H1 (cell line): ENCODE measurements at regions of chr4 and their contacts with region 1.

Region 1: GRCh38 chr4:15805583-15806517 is 27.7 kb downstream of the CD38 start:
- DNase-seq: no peak
- H3K4me3 ChIP-seq: no peak overlapping the region
- H3K27ac ChIP-seq: no peak overlapping the region
- H3K4me1 ChIP-seq: peaks cover 0 to 3% (median 0%) of the 10 kb centered on the region in 4 experiments; a peak in 1 of 7 replicates
- H3K27me3 ChIP-seq: no peaks in the 10 kb centered on the region
- CTCF ChIP-seq: peak; percentile 0 to 85 (median 78)
- EP300 ChIP-seq: no peak
- POLR2A ChIP-seq: no peak
- RAD21 ChIP-seq: peak; percentile 92 to 95

Region 2: GRCh38 chr4:15479089-15479912 is 326.5 kb before region 1 on chr4:
- CTCF ChIA-PET with region 1: interaction called, 15 read pairs
- POLR2A ChIA-PET with region 1: no interaction called
- DNase-seq: peak; percentile 73 to 87
- H3K4me3 ChIP-seq: peak overlapping the region; percentile 40 to 69 (median 66)
- H3K27ac ChIP-seq: peak overlapping the region; percentile 86
- H3K4me1 ChIP-seq: peaks cover 3 to 6% (median 5%) of the 10 kb centered on the region in 4 experiments; a peak in 5 of 7 replicates
- H3K27me3 ChIP-seq: no peaks in the 10 kb centered on the region
- CTCF ChIP-seq: peak in 2 of 3 experiments; percentile 68 to 80; a peak in 3 of 4 replicates
- EP300 ChIP-seq: no peak
- POLR2A ChIP-seq: peak; percentile 55 to 85
- RAD21 ChIP-seq: peak; percentile 89 to 90

Region 3: DNA sequence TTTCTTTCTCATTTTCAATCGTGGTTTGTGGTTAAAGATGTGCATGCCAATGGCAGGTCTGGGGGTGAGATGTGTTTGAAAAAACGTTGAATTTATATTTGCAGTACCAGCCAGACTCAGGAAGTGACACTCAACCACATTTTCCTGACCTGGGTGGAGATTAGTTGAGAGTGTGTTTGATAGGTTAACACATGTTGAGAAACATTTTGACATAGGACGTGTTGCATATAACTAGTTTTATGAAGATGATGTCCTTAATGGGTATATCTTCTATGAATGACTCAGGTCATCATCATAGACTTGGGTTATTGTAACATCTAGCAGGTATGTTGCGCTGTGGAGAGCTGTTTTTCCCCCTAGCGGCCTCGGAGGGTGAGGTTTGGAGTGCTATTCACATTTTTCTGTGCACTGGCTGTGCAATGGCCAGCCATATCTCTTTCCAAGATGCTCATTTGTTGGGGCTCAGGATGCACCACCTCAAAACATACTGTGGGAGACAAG is 49.4 kb before region 1 on chr4:
- CTCF ChIA-PET with region 1: interaction called, 11 read pairs
- POLR2A ChIA-PET with region 1: no interaction called
- DNase-seq: no peak
- H3K4me3 ChIP-seq: no peak overlapping the region
- H3K27ac ChIP-seq: no peak overlapping the region
- H3K4me1 ChIP-seq: no peaks in the 10 kb centered on the region
- H3K27me3 ChIP-seq: no peaks in the 10 kb centered on the region
- CTCF ChIP-seq: peak in 1 of 3 experiments; percentile 2; a peak in 1 of 4 replicates
- EP300 ChIP-seq: no peak
- POLR2A ChIP-seq: no peak
- RAD21 ChIP-seq: no peak

Region 4: GRCh38 chr4:15906024-15906443 is 100.2 kb after region 1 on chr4:
- CTCF ChIA-PET with region 1: interaction called, 10 read pairs
- POLR2A ChIA-PET with region 1: no interaction called
- DNase-seq: peak; percentile 79 to 80
- H3K4me3 ChIP-seq: peak overlapping the region; percentile 6 to 55 (median 30); a peak in 6 of 8 replicates
- H3K27ac ChIP-seq: no peak overlapping the region; the same call in 1 of the 2 replicates
- H3K4me1 ChIP-seq: peaks cover 0 to 2% (median 0%) of the 10 kb centered on the region in 4 experiments; a peak in 1 of 7 replicates
- H3K27me3 ChIP-seq: no peaks in the 10 kb centered on the region
- CTCF ChIP-seq: peak in 1 of 3 experiments; percentile 0; a peak in 1 of 4 replicates
- EP300 ChIP-seq: no peak
- POLR2A ChIP-seq: 0 out of 3 replicates have a peak, but pooled peaks of 1 of the 2 experiments have one; percentile 22
- RAD21 ChIP-seq: no peak

Region 5: DNA sequence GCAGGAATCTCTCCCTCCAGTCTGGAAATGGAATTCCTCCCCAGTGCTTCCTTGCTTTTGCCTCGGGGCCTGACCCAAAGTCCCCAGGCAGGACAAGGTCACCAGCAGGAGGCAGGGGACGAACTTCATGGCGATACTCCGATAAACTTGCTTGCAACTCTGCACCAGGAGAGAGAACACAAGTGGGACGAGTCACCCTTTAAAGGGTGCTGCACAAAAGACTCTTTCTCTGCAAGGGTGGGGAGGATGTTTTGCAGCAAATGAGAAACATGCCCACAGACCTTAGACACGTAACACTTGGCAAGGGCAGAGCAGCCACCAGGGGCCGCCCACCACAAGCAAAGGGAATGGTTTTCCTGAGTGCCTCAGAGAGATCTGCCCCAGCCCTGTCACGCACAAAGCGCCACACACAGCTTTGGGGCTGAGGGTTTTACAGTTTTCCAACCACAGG is 157.2 kb after region 1 on chr4 and contains the start of gene FGFBP2:
- CTCF ChIA-PET with region 1: interaction called, 64 read pairs
- POLR2A ChIA-PET with region 1: interaction called, 3 read pairs
- DNase-seq: peak in 1 of 2 experiments; percentile 78
- H3K4me3 ChIP-seq: no peak within 1 kb of the TSS
- H3K27ac ChIP-seq: no peak within 1 kb of the TSS
- H3K4me1 ChIP-seq: peaks cover 0 to 2% (median under 1%) of the 10 kb centered on the region in 4 experiments; a peak in 4 of 7 replicates
- H3K27me3 ChIP-seq: no peaks in the 10 kb centered on the region
- CTCF ChIP-seq: peak; percentile 74 to 89 (median 82)
- EP300 ChIP-seq: no peak
- POLR2A ChIP-seq: no peak
- RAD21 ChIP-seq: peak; percentile 81 to 83
- total RNA-seq, gene FGFBP2: not detected in 2 replicates

Region 6: GRCh38 chr4:16120720-16121119 is 314.9 kb after region 1 on chr4:
- CTCF ChIA-PET with region 1: no interaction called
- POLR2A ChIA-PET with region 1: no interaction called
- DNase-seq: no peak
- H3K4me3 ChIP-seq: no peak overlapping the region
- H3K27ac ChIP-seq: no peak overlapping the region
- H3K4me1 ChIP-seq: peaks cover 0 to 2% (median 0%) of the 10 kb centered on the region in 4 experiments; a peak in 2 of 7 replicates
- H3K27me3 ChIP-seq: no peaks in the 10 kb centered on the region
- CTCF ChIP-seq: no peak
- EP300 ChIP-seq: no peak
- POLR2A ChIP-seq: no peak
- RAD21 ChIP-seq: no peak

Region 7: DNA sequence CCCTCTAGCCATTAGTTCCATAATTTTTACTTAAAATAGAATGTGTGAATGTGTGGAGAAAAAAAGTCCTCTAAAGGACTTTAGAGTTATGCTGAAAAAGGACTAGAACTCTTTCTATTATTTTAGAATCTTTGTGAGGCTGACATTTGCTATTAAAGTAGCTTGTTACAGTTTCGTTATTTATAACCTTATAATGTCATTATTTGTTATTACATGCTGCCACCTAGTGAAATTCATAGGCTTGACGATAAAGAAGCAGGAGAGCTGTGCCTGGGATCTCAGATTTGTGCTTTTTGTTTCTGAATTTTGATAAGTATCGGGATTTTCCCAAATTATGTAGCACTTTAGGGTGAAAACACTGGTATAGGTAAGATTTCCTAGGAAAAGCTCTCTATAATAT is 458.9 kb after region 1 on chr4:
- CTCF ChIA-PET with region 1: interaction called, 14 read pairs
- POLR2A ChIA-PET with region 1: no interaction called
- DNase-seq: no peak
- H3K4me3 ChIP-seq: no peak overlapping the region
- H3K27ac ChIP-seq: no peak overlapping the region
- H3K4me1 ChIP-seq: no peaks in the 10 kb centered on the region
- H3K27me3 ChIP-seq: peaks cover 0 to 1% (median 0%) of the 10 kb centered on the region in 4 experiments; a peak in 1 of 7 replicates
- CTCF ChIP-seq: peak in 2 of 3 experiments; percentile 25 to 41; a peak in 2 of 4 replicates
- EP300 ChIP-seq: no peak
- POLR2A ChIP-seq: no peak
- RAD21 ChIP-seq: peak; percentile 65 to 69